Gastrocnemius medialis (tissue), 4 donors: ENCODE measurements at regions of chr13 and their contacts with region 1.

Region 1: GRCh38 chr13:40666045-40666904 is at the start of gene FOXO1:
- DNase-seq: peak; percentile 80 to 91
- ATAC-seq: peak; percentile 51 to 55
- H3K4me3 ChIP-seq: peak within 1 kb of the TSS; percentile 84 to 96 (median 93)
- H3K27ac ChIP-seq: peak within 1 kb of the TSS; percentile 96 to 99 (median 98)
- H3K4me1 ChIP-seq: peaks cover 20 to 30% of the 10 kb centered on the region in 2 donors
- H3K27me3 ChIP-seq: no peaks in the 10 kb centered on the region
- CTCF ChIP-seq: peak in 1 of 5 experiments; percentile 15
- POLR2A ChIP-seq: peak; percentile 98 to 99
- total RNA-seq, gene FOXO1: 117 to 250 (median 159) TPM

Region 2: DNA sequence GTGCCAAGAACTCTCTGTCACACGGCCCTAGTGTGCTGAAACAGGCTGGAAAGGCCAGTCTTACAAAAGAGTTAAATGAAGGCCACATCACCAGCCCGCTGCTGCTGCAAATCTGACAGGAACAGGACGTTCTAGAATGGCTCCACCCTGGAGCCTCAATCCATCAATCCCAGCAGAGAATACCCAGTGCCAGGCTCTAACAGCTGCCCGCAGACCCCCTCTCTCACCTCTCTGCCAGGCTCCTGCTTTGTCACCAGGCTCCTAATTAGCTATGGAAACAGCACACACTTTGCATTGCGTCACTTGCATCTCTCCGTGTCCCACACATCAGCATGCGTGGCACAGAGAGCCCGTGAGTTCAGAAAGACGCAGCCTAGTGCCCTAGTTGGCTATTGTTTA is 313.9 kb before region 1 on chr13:
- in situ Hi-C with region 1: no loop called
- intact Hi-C with region 1: loop called (anchors 2 kb)
- DNase-seq: peak; percentile 91 to 97
- ATAC-seq: peak; percentile 70 to 76
- H3K4me3 ChIP-seq: peak overlapping the region in 1 of 4 donors; percentile 29
- H3K27ac ChIP-seq: peak overlapping the region; percentile 88 to 98 (median 94)
- H3K4me1 ChIP-seq: peaks cover 35 to 36% of the 10 kb centered on the region in 2 donors
- H3K27me3 ChIP-seq: no peaks in the 10 kb centered on the region
- CTCF ChIP-seq: no peak
- POLR2A ChIP-seq: peak in 1 of 2 donors; percentile 22

Region 3: GRCh38 chr13:40433577-40433976 is 232.7 kb before region 1 on chr13:
- in situ Hi-C with region 1: no loop called
- intact Hi-C with region 1: no loop called
- DNase-seq: no peak
- ATAC-seq: no peak
- H3K4me3 ChIP-seq: no peak overlapping the region
- H3K27ac ChIP-seq: no peak overlapping the region
- H3K4me1 ChIP-seq: peaks cover 10 to 22% of the 10 kb centered on the region in 2 donors
- H3K27me3 ChIP-seq: no peaks in the 10 kb centered on the region
- CTCF ChIP-seq: no peak
- POLR2A ChIP-seq: no peak

Region 4: GRCh38 chr13:40445557-40445990 is 220.7 kb before region 1 on chr13:
- in situ Hi-C with region 1: loop called in 1 of 4 experiments (anchors 10 kb)
- intact Hi-C with region 1: loop called (anchors 1 kb)
- DNase-seq: peak; percentile 29 to 72
- ATAC-seq: peak; percentile 46 to 48
- H3K4me3 ChIP-seq: no peak overlapping the region
- H3K27ac ChIP-seq: peak overlapping the region; percentile 19 to 45 (median 42)
- H3K4me1 ChIP-seq: peaks cover 30 to 34% of the 10 kb centered on the region in 2 donors
- H3K27me3 ChIP-seq: no peaks in the 10 kb centered on the region
- CTCF ChIP-seq: no peak
- POLR2A ChIP-seq: no peak

Region 5: DNA sequence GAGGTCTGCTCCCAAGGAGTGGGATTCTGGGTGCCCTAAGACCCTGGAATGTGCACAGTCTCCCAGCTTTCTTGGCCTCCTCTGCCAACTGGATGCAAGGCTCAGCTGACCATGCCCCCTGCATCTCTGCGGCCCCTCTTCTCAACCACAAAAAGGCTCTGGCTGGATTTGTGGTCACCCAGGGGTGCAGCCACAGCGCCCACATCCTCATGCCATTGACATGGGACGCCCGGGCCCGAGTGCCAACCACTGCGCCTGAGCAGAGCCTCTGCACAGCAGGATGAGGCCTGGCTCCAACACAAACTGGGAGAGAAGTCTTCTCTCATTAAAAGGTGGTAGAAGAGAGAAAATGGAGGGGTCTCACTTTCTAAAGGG is 103.3 kb before region 1 on chr13:
- in situ Hi-C with region 1: no loop called
- intact Hi-C with region 1: loop called (anchors 2 kb)
- DNase-seq: no peak
- ATAC-seq: no peak
- H3K4me3 ChIP-seq: no peak overlapping the region
- H3K27ac ChIP-seq: peak overlapping the region; percentile 72 to 78 (median 75)
- H3K4me1 ChIP-seq: peaks cover 85 to 89% of the 10 kb centered on the region in 2 donors
- H3K27me3 ChIP-seq: no peaks in the 10 kb centered on the region
- CTCF ChIP-seq: no peak
- POLR2A ChIP-seq: no peak

Region 6: DNA sequence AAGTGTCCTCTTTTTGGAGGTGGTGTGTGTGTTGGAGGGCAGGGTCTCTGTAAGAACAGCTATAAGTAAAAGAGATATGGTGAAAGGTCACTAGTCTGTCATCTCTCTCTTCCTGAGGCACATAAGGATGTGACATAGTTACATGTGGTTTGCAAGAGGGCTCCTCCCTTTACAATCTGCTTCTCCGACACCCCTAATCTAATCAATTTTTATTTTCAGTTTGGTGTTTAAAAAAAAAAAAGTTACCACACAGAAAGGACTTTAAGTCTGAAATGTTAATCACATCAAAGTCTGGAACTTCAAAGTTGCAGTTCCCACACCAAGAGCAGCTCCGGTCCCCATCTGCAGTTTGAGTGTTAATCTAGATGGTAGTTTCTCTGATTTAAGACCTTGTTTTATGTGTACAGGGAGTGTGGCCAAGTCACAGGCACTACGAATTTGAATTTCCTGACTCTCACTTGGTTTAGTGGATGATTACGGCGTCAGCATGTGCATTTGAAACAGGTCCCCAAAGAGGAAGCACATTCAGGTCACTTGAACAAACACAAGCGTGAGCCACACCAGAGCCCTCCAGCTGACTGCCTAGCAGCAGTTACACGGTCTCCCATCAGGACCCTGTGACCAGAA is 53.0 kb before region 1 on chr13:
- in situ Hi-C with region 1: no loop called
- intact Hi-C with region 1: loop called (anchors 5 kb)
- DNase-seq: peak; percentile 38 to 39
- ATAC-seq: peak in 1 of 2 donors; percentile 22
- H3K4me3 ChIP-seq: peak overlapping the region in 2 of 4 donors; percentile 15 to 26
- H3K27ac ChIP-seq: peak overlapping the region; percentile 72 to 76 (median 73)
- H3K4me1 ChIP-seq: peaks cover 99% of the 10 kb centered on the region in 2 donors
- H3K27me3 ChIP-seq: no peaks in the 10 kb centered on the region
- CTCF ChIP-seq: no peak
- POLR2A ChIP-seq: peak in 1 of 2 donors; percentile 27